Esophagus squamous epithelium (tissue), 5 donors: ENCODE measurements at regions of chr1 and their contacts with region 1.

Region 1: GRCh38 chr1:160085686-160086455 is 4.5 kb downstream of the KCNJ9 start:
- DNase-seq: no peak
- H3K4me3 ChIP-seq: no peak overlapping the region
- H3K27ac ChIP-seq: no peak overlapping the region
- H3K4me1 ChIP-seq: peaks cover 0 to 11% (median 9%) of the 10 kb centered on the region in 3 donors
- H3K27me3 ChIP-seq: peaks cover 2 to 36% (median 5%) of the 10 kb centered on the region in 4 donors
- CTCF ChIP-seq: peak; percentile 56 to 80 (median 66)
- POLR2A ChIP-seq: no peak

Region 2: DNA sequence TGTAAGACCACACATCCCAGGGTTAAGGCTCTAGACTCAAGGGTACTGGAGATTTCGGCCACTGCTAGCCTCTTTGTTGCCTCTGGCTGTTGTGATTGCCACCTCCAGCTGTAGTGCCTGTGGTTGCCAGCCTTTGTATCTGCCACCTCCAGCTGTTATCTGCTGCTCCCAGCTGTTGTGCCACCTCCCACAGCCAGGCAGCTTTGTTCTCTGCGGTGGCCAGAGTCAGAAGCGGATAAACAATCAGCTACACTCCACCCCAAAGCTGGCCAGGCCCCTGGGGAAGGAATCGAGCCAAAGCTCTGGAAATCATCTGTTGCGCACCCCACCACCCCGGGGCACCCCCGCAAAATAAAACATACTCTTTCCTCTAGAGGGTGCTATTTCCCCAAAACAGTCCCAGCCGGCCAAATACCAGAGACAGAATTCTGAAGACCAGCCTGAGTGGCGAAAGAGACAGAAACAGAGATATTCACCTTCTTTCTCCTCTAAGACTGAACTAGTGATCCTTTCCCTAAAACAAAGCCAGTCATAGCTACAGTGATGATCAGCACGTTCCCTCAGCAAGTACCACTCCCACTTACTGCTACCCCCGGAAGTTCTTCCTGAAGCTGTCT is 39.3 kb before region 1 on chr1:
- intact Hi-C with region 1: loop called (anchors 5 kb)
- DNase-seq: no peak
- H3K4me3 ChIP-seq: peak overlapping the region in 1 of 4 donors; percentile 35
- H3K27ac ChIP-seq: no peak overlapping the region
- H3K4me1 ChIP-seq: peaks cover 8 to 14% (median 8%) of the 10 kb centered on the region in 3 donors
- H3K27me3 ChIP-seq: peaks cover 0 to 12% (median 0%) of the 10 kb centered on the region in 4 donors
- CTCF ChIP-seq: peak; percentile 28 to 70 (median 52)
- POLR2A ChIP-seq: no peak

Region 3: DNA sequence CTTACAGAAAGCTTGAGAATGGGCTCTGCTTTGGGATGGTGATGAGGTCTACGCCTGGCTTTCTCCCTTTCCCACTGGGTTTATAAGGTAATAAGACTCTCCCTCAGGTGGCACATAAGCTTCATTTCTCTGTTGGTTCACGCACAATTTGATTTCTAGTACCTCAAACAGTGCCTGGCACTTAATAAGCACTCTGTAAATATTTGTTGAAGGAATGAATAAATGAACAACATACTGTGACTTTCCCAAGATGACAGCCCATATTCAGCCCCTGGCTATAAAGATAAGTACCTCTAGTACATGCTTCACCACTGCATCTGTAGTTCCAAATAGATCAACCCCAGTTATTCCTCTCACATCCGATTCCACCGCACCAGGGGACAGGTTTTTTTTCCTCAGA is 239.4 kb after region 1 on chr1:
- intact Hi-C with region 1: no loop called
- DNase-seq: no peak
- H3K4me3 ChIP-seq: no peak overlapping the region
- H3K27ac ChIP-seq: no peak overlapping the region
- H3K4me1 ChIP-seq: no peaks in the 10 kb centered on the region
- H3K27me3 ChIP-seq: no peaks in the 10 kb centered on the region
- CTCF ChIP-seq: no peak
- POLR2A ChIP-seq: no peak